ENCODE measurements at regions of chr19 and their contacts with region 1.

Region 1: GRCh38 chr19:43675269-43675879 is 5.4 kb upstream of the PLAUR start:
- DNase-seq: no peak
- ATAC-seq: peak; percentile 83
- H3K4me3 Mint-ChIP-seq: peak overlapping the region; percentile 7
- H3K27ac Mint-ChIP-seq: peak overlapping the region; percentile 67
- H3K4me1 Mint-ChIP-seq: peaks cover 14% of the 10 kb centered on the region
- H3K27me3 Mint-ChIP-seq: no peaks in the 10 kb centered on the region
- CTCF ChIP-seq: no peak

Region 2: DNA sequence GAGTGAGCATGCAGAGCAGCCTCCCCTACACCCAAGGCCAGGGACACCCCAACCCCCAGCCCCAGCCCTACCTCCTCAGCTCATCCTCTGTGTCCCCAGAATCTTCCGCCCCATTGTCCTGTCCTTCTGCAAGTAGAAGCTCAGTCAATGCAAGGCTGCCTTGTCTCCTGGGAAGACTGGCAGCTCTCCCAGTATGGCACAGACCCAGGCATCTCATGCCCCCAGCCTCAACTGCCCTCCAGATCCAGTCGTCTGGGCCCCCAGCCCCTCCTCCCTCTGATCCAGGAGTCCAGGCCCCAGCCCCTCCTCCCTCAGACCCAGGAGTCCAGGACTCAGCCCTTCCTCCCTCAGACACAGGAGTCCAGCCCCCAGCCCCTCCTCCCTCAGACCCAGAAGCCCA is 129.4 kb before region 1 on chr19:
- CTCF ChIA-PET with region 1: no interaction called
- POLR2A ChIA-PET with region 1: no interaction called
- intact Hi-C with region 1: no loop called
- DNase-seq: no peak
- ATAC-seq: no peak
- H3K4me3 Mint-ChIP-seq: no peak overlapping the region
- H3K27ac Mint-ChIP-seq: no peak overlapping the region
- H3K4me1 Mint-ChIP-seq: no peaks in the 10 kb centered on the region
- H3K27me3 Mint-ChIP-seq: no peaks in the 10 kb centered on the region
- CTCF ChIP-seq: no peak

Region 3: DNA sequence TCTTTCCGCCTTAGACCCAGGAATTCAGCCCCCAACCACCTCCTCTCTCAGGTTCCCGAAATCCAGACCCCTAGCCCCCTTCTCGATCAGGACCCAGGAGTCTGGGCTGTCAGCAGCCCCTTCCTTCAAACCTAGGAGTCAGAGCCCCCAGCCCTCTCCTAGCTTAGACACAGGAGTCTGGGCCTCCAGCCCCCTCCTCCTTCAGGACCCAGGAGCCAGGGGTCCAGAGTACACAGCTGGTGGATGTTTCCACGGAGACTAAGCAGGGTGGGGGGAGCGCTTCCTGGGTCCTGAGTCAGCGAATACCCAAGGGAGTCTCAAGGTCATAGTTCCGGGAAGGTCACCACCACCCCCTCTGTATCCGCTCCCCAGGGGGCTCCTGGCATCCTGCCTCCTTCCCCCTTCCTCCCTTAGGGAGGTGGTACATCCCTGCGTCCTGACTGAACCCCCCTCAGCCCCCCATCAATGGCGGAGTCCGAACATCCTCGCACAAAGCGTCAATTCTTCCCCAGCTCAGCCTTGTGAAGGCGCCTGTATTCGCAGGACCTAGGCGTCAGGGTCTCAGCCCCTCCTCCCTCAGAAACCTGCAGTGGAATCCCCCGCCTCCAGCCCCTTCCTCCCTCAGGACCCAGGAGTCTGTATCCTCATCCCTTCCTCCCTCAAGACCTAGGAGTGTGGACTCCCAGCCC is 40.4 kb before region 1 on chr19:
- CTCF ChIA-PET with region 1: no interaction called
- POLR2A ChIA-PET with region 1: no interaction called
- intact Hi-C with region 1: no loop called
- DNase-seq: no peak
- ATAC-seq: no peak
- H3K4me3 Mint-ChIP-seq: no peak overlapping the region
- H3K27ac Mint-ChIP-seq: no peak overlapping the region
- H3K4me1 Mint-ChIP-seq: peaks cover 6% of the 10 kb centered on the region
- H3K27me3 Mint-ChIP-seq: peaks cover 22% of the 10 kb centered on the region
- CTCF ChIP-seq: no peak

Region 4: DNA sequence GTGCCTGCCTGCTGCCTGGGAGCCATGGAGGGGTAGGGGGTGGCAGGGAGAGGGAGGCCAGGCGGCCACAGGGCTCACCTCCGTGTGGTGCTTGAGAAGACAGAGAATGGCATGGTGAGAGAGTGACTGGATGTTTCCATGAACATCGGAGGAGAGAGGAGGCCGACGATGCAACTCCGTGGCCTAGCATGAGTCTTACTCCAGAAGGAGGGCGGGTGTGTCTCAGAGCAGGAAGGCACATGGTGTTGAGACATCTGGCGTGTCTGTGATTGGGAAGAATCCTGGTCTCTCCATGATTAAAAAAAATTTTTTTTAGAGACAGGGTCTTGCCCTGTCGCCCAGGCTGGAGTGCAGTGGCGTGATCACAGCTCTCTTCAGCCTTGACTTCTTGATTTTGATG is 45.6 kb after region 1 on chr19:
- CTCF ChIA-PET with region 1: no interaction called
- POLR2A ChIA-PET with region 1: interaction called, 4 read pairs
- intact Hi-C with region 1: loop called (anchors 2 kb)
- DNase-seq: no peak
- ATAC-seq: no peak
- H3K4me3 Mint-ChIP-seq: no peak overlapping the region
- H3K27ac Mint-ChIP-seq: no peak overlapping the region
- H3K4me1 Mint-ChIP-seq: peaks cover 4% of the 10 kb centered on the region
- H3K27me3 Mint-ChIP-seq: no peaks in the 10 kb centered on the region
- CTCF ChIP-seq: no peak

Region 5: DNA sequence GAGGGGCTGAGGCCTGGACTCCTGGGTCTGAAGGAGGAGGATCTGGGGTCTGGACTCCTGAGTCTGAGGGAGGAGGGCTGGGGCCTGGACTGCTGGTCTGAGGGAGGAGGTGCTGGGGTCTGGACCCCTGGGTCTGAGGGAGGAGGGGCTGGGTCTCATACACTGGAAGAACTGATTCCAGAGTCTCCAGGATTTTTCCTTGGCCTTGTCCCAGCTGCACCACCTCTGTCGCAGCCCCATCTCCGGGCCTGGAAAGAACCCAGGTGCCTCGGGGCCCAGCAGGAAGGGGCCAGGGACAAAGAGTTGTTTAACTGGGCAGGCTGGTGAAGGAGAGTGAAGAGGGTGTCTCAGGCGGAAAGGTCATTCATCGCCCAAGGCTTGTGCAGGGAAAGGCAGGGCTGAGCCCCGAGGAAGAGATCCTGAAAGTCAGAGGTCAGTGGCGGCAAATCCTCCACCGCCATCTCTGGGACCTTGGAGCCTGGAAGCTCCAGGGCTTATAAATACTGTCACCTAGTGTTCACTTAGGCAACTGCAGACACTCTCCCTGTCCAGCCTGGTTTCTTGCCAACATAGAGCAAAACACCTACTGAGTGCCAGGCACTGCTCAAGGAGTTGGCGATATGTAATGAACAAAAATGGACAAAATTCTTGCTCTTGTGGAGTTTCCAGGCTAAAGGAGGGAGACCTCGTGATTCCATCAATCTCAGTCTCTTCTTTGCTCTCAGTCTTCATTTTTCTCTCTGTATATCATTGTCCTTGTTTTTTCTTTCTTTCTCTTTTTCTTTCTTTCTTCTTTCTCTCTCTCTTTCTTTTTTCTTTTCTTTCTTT is 109.8 kb after region 1 on chr19:
- CTCF ChIA-PET with region 1: interaction called, 7 read pairs
- POLR2A ChIA-PET with region 1: no interaction called
- intact Hi-C with region 1: loop called (anchors 10 kb)
- DNase-seq: peak; percentile 71
- ATAC-seq: peak; percentile 23
- H3K4me3 Mint-ChIP-seq: peak overlapping the region; percentile 67
- H3K27ac Mint-ChIP-seq: peak overlapping the region; percentile 94
- H3K4me1 Mint-ChIP-seq: peaks cover 39% of the 10 kb centered on the region
- H3K27me3 Mint-ChIP-seq: peaks cover 6% of the 10 kb centered on the region
- CTCF ChIP-seq: peak; percentile 95

Measured in activated CD8-positive, alpha-beta T cell treated with anti-CD3 and anti-CD28 coated beads for 36 hours (primary cell).